ENCODE measurements at regions of chr6 and their contacts with region 1.

Region 1: DNA sequence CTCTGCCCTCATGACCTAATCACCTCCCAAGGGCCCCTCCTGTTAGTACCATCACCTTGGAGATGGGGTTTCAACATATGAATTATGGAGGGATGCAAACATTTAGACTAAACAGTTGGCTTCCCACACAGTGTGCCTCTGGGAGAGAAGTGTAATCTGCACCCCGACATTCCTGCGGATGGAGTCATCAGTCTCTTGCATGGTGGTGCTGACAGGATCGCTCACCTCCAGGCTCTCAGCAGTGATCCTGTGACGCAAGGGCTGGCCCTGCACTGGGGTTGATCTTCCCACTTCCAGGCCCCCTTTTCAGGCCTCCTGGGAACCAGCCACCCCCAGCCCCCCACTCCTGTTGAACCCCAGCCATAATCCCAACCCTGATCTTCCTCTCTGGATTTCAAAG is 16.0 kb upstream of the PI16 start:
- DNase-seq: peak; percentile 60
- H3K4me3 ChIP-seq: no peak overlapping the region
- H3K27ac ChIP-seq: no peak overlapping the region
- H3K4me1 ChIP-seq: peaks cover 7% of the 10 kb centered on the region
- H3K27me3 ChIP-seq: no peaks in the 10 kb centered on the region
- CTCF ChIP-seq: no peak

Region 2: GRCh38 chr6:36893976-36894932 is 44.3 kb before region 1 on chr6:
- CTCF ChIA-PET with region 1: no interaction called
- dilution Hi-C with region 1: loop called (anchors 5 kb)
- in situ Hi-C with region 1: no loop called
- intact Hi-C with region 1: no loop called
- DNase-seq: no peak
- H3K4me3 ChIP-seq: no peak overlapping the region
- H3K27ac ChIP-seq: no peak overlapping the region
- H3K4me1 ChIP-seq: peaks cover 9% of the 10 kb centered on the region
- H3K27me3 ChIP-seq: no peaks in the 10 kb centered on the region
- CTCF ChIP-seq: no peak

Region 3: GRCh38 chr6:37131104-37131959 is 192.8 kb after region 1 on chr6:
- CTCF ChIA-PET with region 1: no interaction called
- dilution Hi-C with region 1: no loop called
- in situ Hi-C with region 1: no loop called
- intact Hi-C with region 1: no loop called
- DNase-seq: no peak
- H3K4me3 ChIP-seq: no peak overlapping the region
- H3K27ac ChIP-seq: no peak overlapping the region
- H3K4me1 ChIP-seq: peaks cover 64% of the 10 kb centered on the region
- H3K27me3 ChIP-seq: no peaks in the 10 kb centered on the region
- CTCF ChIP-seq: no peak

Region 4: DNA sequence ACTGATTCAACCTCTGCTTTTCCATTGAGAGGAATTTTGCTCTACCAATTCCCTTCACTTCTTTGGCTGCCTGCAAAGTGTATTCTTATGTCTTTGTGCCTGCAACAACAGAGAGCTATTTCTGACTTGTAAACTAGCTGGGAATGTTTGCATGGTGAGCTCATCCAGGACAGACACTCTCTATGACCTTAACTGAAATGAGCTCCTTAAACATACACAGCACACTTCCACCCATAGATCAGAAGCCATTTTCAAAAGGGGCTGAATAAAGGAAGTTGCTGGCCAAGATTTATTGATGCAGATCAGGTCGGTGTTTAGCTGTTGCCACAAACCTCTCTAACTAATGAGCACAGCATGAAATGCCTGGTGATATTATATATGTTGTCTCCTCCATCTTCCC is 1323.5 kb after region 1 on chr6:
- CTCF ChIA-PET with region 1: no interaction called
- dilution Hi-C with region 1: no loop called
- in situ Hi-C with region 1: no loop called
- intact Hi-C with region 1: no loop called
- DNase-seq: peak; percentile 67
- H3K4me3 ChIP-seq: no peak overlapping the region
- H3K27ac ChIP-seq: peak overlapping the region; percentile 41
- H3K4me1 ChIP-seq: peaks cover 44% of the 10 kb centered on the region
- H3K27me3 ChIP-seq: no peaks in the 10 kb centered on the region
- CTCF ChIP-seq: no peak